GM10248 (cell line): ENCODE measurements at regions of chr1 and their contacts with region 1.

Region 1: DNA sequence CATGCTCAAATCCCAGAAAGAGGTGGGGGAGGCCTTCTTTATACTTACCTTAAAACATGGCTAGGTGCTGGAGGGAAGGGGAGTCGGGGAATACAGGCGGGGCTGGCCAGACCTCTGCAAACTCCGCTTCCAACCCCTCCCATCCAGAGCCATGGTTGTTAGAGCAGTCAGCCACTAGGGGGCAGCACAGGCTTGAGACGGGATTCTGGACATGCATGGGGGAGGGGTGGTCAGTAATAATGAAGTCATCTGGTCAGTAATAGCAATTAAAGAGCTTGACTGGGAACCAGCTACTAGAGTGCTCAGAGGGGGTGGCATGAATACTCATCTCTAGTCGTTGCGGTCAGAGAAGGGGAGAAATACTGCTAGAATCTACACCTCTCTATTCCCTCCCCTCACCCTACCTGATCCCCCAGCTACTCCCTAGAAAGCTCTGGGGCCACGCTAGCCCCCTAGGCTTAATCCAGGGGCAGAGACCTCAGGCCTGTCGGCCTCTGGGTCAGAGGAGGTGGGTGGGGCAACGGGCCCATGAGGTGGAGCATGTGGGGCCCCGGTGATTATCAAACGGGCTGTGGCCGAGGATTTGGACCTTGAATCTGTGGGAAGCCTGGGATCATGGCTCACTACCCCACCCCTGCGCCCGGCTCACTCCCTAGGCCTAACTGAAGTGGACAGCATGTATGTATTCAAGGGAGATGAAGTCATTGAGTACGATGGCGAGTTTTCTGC is 2.9 kb downstream of the CASQ1 start:
- DNase-seq: peak; percentile 79
- CTCF ChIP-seq: peak; percentile 98

Region 2: DNA sequence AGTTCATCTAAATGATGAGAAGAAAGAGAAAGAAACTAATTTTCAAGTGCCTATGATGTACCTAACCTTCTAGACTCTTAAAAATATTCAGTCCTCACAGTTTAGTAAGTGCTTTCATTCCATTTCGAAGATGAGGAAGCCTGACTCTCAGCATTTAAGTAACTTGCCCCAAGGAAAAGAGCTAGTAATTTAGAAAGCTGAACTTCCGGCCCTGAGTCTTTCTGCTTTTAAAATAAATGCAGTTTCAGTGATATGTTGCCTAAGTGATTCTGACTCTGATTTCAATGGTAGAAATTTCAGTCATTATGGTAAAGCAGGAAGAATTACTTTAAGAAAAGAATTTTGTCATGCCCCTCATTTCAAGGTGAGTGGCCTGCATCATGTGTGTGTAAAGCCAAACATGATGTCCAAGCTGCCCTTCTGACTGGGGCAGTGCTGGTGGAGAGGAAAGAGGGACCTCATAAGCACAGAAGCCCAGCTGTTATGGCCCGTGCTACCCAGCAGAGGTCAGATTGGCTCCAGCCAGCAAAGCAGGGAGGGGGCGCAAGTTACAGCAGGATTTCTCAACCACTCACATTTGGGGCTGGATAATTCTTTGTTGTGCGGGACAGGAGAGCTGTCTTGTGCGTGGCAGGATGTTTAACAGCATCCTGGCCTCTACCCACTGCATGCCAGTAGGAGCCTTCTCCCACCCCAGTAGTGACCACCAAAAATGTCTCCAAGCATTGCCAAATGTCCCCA is 31.1 kb before region 1 on chr1:
- CTCF ChIA-PET with region 1: interaction called, 17 read pairs
- POLR2A ChIA-PET with region 1: no interaction called
- DNase-seq: peak; percentile 41
- CTCF ChIP-seq: peak; percentile 46

Region 3: DNA sequence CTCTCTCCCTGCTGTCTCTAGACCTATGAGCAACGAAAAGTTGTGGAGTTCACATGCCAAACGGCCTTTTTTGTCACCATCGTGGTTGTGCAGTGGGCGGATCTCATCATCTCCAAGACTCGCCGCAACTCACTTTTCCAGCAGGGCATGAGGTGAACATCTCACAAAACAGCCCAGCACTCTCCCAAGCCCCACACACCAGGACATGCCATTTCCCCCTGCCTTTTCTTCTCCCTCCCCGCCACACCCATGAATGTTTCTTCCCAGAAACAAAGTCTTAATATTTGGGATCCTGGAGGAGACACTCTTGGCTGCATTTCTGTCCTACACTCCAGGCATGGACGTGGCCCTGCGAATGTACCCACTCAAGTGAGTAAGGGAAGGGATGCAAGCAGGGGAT is 11.6 kb before region 1 on chr1:
- CTCF ChIA-PET with region 1: interaction called, 18 read pairs
- POLR2A ChIA-PET with region 1: no interaction called
- DNase-seq: no peak
- CTCF ChIP-seq: no peak

Region 4: GRCh38 chr1:160219062-160219929 is 26.0 kb after region 1 on chr1:
- CTCF ChIA-PET with region 1: interaction called, 12 read pairs
- POLR2A ChIA-PET with region 1: no interaction called
- DNase-seq: no peak
- CTCF ChIP-seq: no peak

Region 5: GRCh38 chr1:160244209-160244608 is 51.0 kb after region 1 on chr1:
- CTCF ChIA-PET with region 1: interaction called, 17 read pairs
- POLR2A ChIA-PET with region 1: no interaction called
- DNase-seq: no peak
- CTCF ChIP-seq: no peak

Region 6: DNA sequence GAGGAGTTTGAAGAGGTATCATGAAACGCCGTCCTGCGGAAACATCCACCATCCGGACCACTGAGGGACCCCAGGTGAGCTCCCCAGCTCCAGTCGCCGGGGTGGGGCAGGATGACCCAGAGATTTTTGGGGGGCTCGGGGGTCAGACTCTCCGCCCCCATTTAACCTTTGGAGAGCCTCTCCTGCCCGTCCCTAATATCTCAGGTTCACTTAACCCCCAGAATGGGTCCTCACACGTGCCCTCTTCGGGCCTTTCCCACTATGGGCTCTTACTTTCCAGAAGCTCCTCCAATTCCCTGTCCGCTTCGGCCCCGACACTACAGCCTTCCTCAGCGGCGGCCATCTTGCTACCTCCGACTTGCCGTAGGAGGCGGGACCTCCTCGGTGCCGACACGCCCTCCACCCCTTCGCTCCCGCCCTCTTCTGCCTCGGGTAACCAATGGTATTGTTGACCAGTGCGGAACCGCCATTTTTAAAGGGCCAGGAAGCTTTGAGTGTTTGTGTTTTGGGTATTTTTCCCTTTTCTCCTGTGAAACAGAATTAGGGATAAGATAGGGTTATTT is 91.6 kb after region 1 on chr1 and contains the start of gene PEX19:
- CTCF ChIA-PET with region 1: interaction called, 126 read pairs
- POLR2A ChIA-PET with region 1: no interaction called
- DNase-seq: peak; percentile 97
- CTCF ChIP-seq: no peak